ENCODE measurements at regions of chrX and their contacts with region 1.

Region 1: DNA sequence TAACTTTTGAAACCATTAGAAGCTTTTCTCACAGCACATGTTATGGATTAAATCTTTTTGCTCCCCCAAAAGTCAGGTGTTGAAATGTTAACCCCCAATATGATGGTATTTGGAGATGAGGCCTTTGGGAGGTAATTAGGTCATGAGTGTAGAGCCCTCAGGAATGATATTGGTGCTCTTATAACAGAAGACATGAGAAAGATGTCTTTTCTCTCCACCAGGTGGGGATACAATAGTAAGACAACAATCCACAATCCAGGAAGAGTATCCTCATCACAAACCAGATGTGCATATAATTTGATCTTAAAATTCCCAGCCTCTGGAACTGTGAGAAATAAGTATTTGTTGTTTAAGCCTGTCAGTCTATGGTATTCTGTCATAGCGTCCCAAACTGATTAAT is 199.4 kb upstream of the ACTRT1 start:
- DNase-seq: peak; percentile 11
- H3K4me3 Mint-ChIP-seq: no peak overlapping the region
- H3K27ac Mint-ChIP-seq: no peak overlapping the region
- H3K4me1 Mint-ChIP-seq: no peaks in the 10 kb centered on the region
- H3K27me3 Mint-ChIP-seq: no peaks in the 10 kb centered on the region
- CTCF ChIP-seq: no peak

Region 2: DNA sequence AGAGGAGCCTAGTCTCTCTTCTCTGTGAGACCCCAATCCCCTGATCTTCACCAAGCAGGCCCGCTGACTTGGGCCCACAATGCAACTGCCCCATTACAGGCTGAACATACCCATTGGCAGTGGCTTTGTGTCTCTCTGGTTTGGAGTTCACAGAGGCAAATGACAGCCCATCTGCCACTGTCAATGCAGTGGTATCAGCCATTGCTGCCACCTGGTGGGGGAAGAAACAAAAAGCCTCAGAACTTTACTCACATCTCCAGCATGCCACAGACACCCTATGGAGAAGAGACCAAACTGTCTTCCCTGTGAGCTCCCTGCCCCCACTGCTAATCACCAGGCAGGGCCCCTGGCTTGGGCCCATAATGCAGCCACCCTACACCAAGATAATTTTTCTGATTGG is 529.9 kb after region 1 on chrX:
- CTCF ChIA-PET with region 1: interaction called, 3 read pairs
- POLR2A ChIA-PET with region 1: no interaction called
- intact Hi-C with region 1: loop called (anchors 5 kb)
- DNase-seq: peak; percentile 47
- H3K4me3 Mint-ChIP-seq: no peak overlapping the region
- H3K27ac Mint-ChIP-seq: no peak overlapping the region
- H3K4me1 Mint-ChIP-seq: peaks cover 8% of the 10 kb centered on the region
- H3K27me3 Mint-ChIP-seq: no peaks in the 10 kb centered on the region
- CTCF ChIP-seq: peak; percentile 19

Region 3: DNA sequence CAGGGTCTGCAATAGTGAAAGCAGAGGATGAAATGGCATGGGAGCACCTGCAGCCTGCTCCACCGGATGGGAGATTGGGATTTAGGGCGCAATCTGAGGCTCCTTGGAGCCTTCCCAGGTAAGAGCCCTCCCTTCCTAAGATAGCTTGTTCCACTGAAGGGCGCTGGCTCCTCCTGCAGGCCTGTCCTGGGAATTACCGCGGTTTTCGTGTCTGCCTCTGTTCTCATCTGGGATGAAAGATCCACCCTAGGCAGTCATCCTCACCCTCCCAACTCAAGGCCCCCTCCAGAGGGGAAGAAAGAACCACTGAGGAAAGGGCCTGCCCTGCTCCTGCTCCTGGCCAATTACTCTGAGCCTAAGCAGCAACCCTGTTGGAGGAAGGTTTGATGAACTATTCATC is 724.2 kb after region 1 on chrX:
- CTCF ChIA-PET with region 1: no interaction called
- POLR2A ChIA-PET with region 1: no interaction called
- intact Hi-C with region 1: loop called (anchors 10 kb)
- DNase-seq: peak; percentile 52
- H3K4me3 Mint-ChIP-seq: no peak overlapping the region
- H3K27ac Mint-ChIP-seq: no peak overlapping the region
- H3K4me1 Mint-ChIP-seq: no peaks in the 10 kb centered on the region
- H3K27me3 Mint-ChIP-seq: no peaks in the 10 kb centered on the region
- CTCF ChIP-seq: peak; percentile 77